ENCODE measurements at regions of chr21 and their contacts with region 1.

Region 1: DNA sequence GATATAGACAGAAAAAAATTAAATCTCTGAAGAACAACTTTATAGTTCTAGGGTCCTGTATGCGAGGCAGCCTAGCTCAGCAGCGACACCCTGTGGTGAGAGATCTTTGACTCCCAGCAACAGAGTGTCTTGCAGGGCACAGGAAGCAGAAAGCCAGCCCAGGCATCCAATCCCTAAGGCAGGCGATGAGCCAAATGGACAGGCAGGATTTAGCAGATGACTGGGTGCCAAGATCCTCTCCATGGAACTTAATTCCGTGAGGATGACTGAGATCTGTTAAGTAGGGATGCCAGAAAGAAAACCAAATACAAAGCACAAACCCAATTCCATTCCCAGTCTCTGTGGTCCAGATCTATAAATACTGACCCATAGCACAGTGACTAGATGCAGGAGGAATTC is 38.8 kb downstream of the HLCS start:
- DNase-seq: peak; percentile 60 to 96 (median 89)

Region 2: GRCh38 chr21:36504067-36505058 is 423.4 kb before region 1 on chr21:
- intact Hi-C with region 1: loop called (anchors 5 kb)
- DNase-seq: peak in 33 of 42 donors; percentile 8 to 86 (median 56)

Region 3: DNA sequence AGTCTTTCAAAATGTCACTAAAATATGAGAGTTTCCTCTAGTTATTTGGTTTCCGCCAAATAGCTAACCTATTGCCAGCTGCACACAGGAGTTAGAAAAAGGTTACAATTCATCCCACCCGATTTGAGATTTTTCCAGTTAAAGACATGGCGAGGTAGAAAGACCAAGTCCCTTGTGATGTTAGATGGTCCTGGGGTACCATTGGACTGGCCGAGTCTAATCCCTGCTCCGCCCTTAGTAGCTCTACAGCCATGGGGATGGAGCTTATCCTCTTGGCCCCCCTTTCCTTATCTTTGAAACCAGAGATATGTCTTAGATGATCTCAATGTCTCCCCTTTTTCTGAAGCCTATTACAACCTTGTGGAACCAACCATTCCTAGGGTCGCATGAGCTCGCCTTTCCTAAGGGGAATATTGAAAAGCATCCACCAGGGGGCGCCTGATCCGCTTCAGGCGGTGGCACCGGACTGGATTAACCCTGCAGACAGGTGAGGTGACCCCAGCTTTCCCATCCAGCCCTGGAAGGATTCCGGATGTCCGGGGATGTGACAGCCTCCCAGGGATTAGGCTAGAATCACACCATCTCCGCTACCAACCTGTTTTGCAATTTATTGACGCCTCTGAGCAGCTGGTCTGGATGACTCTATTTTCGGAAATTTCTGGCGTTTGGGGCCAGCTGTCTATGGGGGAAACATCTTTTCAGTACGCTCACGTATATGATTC is 297.1 kb before region 1 on chr21:
- intact Hi-C with region 1: loop called (anchors 10 kb)
- DNase-seq: peak in 40 of 42 donors; percentile 33 to 90 (median 70)

Region 4: DNA sequence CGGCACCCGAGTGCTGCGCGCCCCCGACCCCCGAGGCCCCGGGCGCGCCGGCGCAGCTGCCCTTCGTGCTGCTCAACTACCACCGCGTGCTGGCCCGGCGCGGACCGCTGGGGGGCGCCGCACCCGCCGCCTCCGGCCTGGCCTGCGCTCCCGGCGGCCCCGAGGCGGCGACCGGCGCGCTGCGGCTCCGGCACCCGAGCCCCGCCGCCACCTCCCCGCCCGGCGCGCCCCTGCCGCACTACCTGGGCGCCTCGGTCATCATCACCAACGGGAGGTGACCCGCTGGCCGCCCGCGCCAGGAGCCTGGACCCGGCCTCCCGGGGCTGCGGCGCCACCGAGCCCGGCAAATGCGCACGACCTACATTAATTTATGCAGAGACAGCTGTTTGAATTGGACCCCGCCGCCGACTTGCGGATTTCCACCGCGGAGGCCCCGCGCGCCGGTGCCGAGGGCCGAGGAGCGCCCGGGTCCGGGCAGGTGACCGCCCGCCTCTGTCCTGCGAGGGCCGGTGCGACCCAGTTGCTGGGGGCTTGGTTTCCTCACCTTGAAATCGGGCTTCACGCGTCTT is 179.8 kb before region 1 on chr21:
- intact Hi-C with region 1: loop called (anchors 10 kb)
- DNase-seq: peak in 40 of 42 donors; percentile 35 to 88 (median 74)

Region 5: DNA sequence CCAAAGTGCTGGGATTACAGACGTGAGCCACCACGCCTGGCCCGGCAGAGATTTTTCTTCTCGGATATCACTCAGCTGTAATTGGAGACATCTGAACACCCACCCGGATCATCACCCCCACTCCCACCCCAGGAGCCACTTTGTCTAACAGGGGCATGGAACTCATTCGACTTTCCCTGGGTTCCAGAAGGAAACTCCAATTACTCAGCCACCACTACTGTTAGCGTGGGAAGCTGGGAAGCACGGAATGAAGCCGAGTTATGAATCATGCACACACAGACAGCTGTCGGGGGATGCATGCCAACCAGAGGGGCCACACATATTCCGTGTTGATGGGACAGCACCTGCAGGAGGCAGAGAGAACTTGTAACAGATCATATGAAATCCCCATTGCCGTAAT is 46.5 kb before region 1 on chr21:
- intact Hi-C with region 1: no loop called
- DNase-seq: peak in 22 of 42 donors; percentile 4 to 63 (median 21)

Measured in head of caudate nucleus (tissue), 42 donors.